SK-N-SH (cell line): ENCODE measurements at regions of chr1 and their contacts with region 1.

Region 1: GRCh38 chr1:224644553-224645154 is 28.5 kb downstream of the CNIH3 start:
- DNase-seq: peak; percentile 59
- H3K4me3 ChIP-seq: no peak overlapping the region; a peak in 1 of 4 replicates
- H3K27ac ChIP-seq: no peak overlapping the region
- H3K4me1 ChIP-seq: peaks cover 0 to 6% of the 10 kb centered on the region in 2 experiments; a peak in 1 of 4 replicates
- H3K27me3 ChIP-seq: no peaks in the 10 kb centered on the region
- CTCF ChIP-seq: peak; percentile 85
- EP300 ChIP-seq: no peak
- RAD21 ChIP-seq: peak; percentile 78

Region 2: GRCh38 chr1:224589006-224589405 is 55.6 kb before region 1 on chr1:
- CTCF ChIA-PET with region 1: no interaction called
- POLR2A ChIA-PET with region 1: no interaction called
- DNase-seq: no peak
- H3K4me3 ChIP-seq: no peak overlapping the region
- H3K27ac ChIP-seq: no peak overlapping the region
- H3K4me1 ChIP-seq: peaks cover 0 to 7% of the 10 kb centered on the region in 2 experiments; a peak in 2 of 4 replicates
- H3K27me3 ChIP-seq: no peaks in the 10 kb centered on the region
- CTCF ChIP-seq: no peak
- EP300 ChIP-seq: no peak
- RAD21 ChIP-seq: no peak

Region 3: DNA sequence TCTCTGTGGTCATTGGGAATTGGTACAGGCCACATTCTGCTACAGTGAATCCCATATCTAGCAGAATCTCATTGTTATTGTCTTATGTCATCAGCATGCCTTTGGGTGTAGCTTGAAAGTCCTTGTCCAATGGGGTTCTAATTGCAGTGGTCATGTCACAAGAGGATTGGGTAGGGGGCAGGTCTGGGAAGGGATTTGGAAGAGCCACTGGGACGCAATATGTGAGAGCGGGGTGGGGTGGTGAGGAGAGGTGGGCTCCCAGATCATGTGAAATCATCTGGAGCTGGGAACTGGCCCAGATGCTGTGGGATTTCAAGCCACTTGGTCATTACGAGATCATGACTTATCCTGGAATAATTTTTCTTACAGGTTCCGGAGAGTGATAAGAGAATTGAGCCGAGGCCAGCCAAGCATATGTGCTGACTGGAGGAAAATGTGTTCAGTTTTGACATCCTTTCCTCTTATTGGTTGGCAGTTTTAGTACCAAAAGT is 12.2 kb before region 1 on chr1:
- CTCF ChIA-PET with region 1: interaction called, 24 read pairs
- POLR2A ChIA-PET with region 1: no interaction called
- DNase-seq: no peak
- H3K4me3 ChIP-seq: no peak overlapping the region
- H3K27ac ChIP-seq: peak overlapping the region; percentile 62 to 87; a peak in 3 of 4 replicates
- H3K4me1 ChIP-seq: peaks cover 12 to 47% of the 10 kb centered on the region in 2 experiments
- H3K27me3 ChIP-seq: no peaks in the 10 kb centered on the region
- CTCF ChIP-seq: no peak
- EP300 ChIP-seq: peak in 1 of 2 experiments; percentile 69; a peak in 2 of 4 replicates
- RAD21 ChIP-seq: no peak

Region 4: GRCh38 chr1:224660074-224660473 is 15.4 kb after region 1 on chr1:
- CTCF ChIA-PET with region 1: interaction called, 20 read pairs
- POLR2A ChIA-PET with region 1: no interaction called
- DNase-seq: no peak
- H3K4me3 ChIP-seq: no peak overlapping the region
- H3K27ac ChIP-seq: no peak overlapping the region
- H3K4me1 ChIP-seq: no peaks in the 10 kb centered on the region
- H3K27me3 ChIP-seq: no peaks in the 10 kb centered on the region
- CTCF ChIP-seq: no peak
- EP300 ChIP-seq: no peak
- RAD21 ChIP-seq: no peak

Region 5: DNA sequence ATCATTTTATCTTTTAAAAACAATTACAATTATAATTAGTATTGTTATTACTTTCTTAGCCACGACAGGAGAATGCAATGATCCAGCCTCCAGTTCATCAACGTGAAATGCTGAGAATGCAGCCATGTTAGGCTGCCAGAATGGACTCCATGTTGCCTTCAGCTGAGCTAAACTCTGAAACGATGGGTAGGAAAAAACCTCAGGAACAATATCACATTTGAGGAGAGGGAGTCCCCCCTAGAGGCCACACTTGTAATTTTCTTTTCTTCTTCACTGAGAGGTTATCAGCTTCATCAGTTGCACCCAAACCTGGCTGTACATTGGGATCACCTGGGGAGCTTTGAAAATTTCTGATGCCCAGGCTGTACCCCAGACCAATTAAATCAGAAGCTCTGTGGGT is 250.3 kb after region 1 on chr1:
- CTCF ChIA-PET with region 1: interaction called, 10 read pairs
- POLR2A ChIA-PET with region 1: no interaction called
- DNase-seq: peak; percentile 6
- H3K4me3 ChIP-seq: no peak overlapping the region; a peak in 1 of 4 replicates
- H3K27ac ChIP-seq: no peak overlapping the region
- H3K4me1 ChIP-seq: no peaks in the 10 kb centered on the region
- H3K27me3 ChIP-seq: no peaks in the 10 kb centered on the region
- CTCF ChIP-seq: peak; percentile 40
- EP300 ChIP-seq: no peak
- RAD21 ChIP-seq: peak; percentile 40